Transverse colon (tissue), 4 donors: ENCODE measurements at regions of chr7 and their contacts with region 1.

Region 1: DNA sequence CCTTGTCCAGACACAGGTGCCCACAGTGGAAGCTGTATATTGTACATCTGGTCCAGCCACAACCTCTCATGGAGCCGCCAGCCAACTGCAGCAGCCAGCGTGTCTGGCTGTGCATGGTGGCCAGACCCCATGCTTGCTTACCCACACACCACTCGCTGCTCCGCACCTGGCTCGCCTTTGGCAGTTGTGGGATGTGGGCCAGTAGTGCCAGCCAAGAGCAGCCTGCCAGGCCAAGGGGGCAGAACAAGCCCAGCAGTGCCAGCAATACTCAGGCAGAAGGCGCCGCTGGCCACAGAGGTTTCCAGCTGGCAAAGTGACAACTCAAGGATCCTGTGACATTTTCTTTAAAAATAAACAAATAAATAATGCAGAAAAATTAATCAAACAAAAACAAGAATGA is 11.7 kb upstream of the TMEM243 start:
- DNase-seq: no peak
- H3K4me3 ChIP-seq: no peak overlapping the region
- H3K27ac ChIP-seq: no peak overlapping the region
- H3K4me1 ChIP-seq: no peaks in the 10 kb centered on the region
- H3K27me3 ChIP-seq: peaks cover 6% of the 10 kb centered on the region
- CTCF ChIP-seq: no peak
- EP300 ChIP-seq: no peak
- POLR2A ChIP-seq: no peak

Region 2: DNA sequence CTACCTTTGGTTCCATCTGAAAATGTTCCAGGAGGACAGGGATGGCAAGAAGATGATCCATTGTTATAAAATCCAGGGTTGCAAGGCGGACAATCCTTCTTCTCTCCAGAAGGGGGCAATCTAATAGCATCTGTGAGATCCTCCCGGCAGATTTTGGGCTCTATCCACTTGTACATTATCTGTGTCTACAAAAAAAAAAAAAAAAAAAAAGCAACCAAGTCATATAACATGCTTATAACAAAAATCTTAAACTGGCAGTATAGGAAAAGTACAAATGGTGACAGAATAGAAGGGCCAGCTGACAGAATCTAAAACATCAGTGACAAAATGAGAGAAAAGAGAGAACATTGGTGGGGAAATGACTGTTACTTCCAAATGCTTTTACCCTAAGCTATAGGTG is 304.5 kb before region 1 on chr7:
- in situ Hi-C with region 1: loop called (anchors 10 kb)
- intact Hi-C with region 1: loop called (anchors 5 kb)
- DNase-seq: no peak
- H3K4me3 ChIP-seq: no peak overlapping the region
- H3K27ac ChIP-seq: no peak overlapping the region
- H3K4me1 ChIP-seq: no peaks in the 10 kb centered on the region
- H3K27me3 ChIP-seq: no peaks in the 10 kb centered on the region
- CTCF ChIP-seq: peak; percentile 51 to 65 (median 58)
- EP300 ChIP-seq: no peak
- POLR2A ChIP-seq: no peak